OCI-LY7 (cell line): ENCODE measurements at regions of chr2 and their contacts with region 1.

Region 1: DNA sequence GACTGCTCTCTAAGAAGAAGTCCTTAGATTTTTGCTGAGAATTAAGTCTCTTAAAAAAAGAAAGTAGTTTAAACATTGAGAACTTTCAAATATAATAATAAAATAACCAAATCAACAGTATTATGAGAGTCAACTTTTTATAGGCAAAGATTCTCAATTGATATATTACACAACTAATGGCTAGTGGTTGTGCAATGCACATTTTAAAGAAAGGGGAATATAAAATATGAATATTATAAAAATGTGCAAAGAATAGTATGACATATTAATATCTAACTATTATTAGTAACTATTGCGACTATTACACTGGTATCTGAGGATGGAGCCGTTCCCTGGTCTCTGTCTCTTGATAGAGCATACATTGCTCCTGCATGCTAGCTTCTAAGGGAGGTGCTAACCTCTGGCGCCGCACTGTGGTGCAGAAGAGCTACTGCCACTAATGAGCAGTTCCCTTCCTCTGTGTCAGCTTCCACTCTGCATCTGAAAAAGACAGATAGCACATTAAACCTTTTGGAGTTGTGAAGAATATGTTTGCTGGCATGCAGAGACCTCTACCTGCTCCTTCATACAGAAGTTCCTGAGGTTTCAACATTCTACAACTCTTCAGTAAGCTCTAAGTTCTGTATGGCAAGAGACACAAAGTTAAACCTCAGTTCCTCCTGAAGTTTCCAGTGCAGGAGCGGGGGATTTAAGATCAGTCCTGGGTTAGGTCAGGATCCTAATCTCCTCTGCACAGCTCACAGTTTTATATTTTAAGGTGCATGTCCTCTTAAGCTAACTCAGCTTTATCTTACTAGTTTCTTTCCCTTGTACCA is 3.5 kb upstream of the SLC9A2 start:
- DNase-seq: peak; percentile 53
- H3K4me3 ChIP-seq: no peak overlapping the region
- H3K27ac ChIP-seq: no peak overlapping the region
- H3K4me1 ChIP-seq: no peaks in the 10 kb centered on the region
- CTCF ChIP-seq: peak; percentile 84

Region 2: GRCh38 chr2:102473020-102473419 is 142.8 kb before region 1 on chr2 and contains the start of gene SLC9A4:
- CTCF ChIA-PET with region 1: no interaction called
- POLR2A ChIA-PET with region 1: no interaction called
- intact Hi-C with region 1: loop called (anchors 10 kb)
- DNase-seq: peak; percentile 27
- H3K4me3 ChIP-seq: no peak within 1 kb of the TSS
- H3K27ac ChIP-seq: no peak within 1 kb of the TSS
- H3K4me1 ChIP-seq: no peaks in the 10 kb centered on the region
- CTCF ChIP-seq: peak; percentile 93
- total RNA-seq, gene SLC9A4: 0.03 TPM in 1 of 2 replicates, not detected in the other

Region 3: GRCh38 chr2:102520028-102520427 is 95.8 kb before region 1 on chr2:
- CTCF ChIA-PET with region 1: no interaction called
- POLR2A ChIA-PET with region 1: no interaction called
- intact Hi-C with region 1: loop called (anchors 10 kb)
- DNase-seq: peak; percentile 8
- H3K4me3 ChIP-seq: no peak overlapping the region
- H3K27ac ChIP-seq: no peak overlapping the region
- H3K4me1 ChIP-seq: no peaks in the 10 kb centered on the region
- CTCF ChIP-seq: peak; percentile 81